ENCODE measurements at regions of chr6 and their contacts with region 1.

Region 1: GRCh38 chr6:89080542-89081422 is at the start of gene PNRC1:
- H3K4me3 ChIP-seq: peak within 1 kb of the TSS; percentile 99
- H3K27ac ChIP-seq: peak within 1 kb of the TSS; percentile 99
- H3K4me1 ChIP-seq: peaks cover 9% of the 10 kb centered on the region; the same call in 1 of the 2 replicates
- CTCF ChIP-seq: peak; percentile 53; the same call in 1 of the 2 replicates

Region 2: DNA sequence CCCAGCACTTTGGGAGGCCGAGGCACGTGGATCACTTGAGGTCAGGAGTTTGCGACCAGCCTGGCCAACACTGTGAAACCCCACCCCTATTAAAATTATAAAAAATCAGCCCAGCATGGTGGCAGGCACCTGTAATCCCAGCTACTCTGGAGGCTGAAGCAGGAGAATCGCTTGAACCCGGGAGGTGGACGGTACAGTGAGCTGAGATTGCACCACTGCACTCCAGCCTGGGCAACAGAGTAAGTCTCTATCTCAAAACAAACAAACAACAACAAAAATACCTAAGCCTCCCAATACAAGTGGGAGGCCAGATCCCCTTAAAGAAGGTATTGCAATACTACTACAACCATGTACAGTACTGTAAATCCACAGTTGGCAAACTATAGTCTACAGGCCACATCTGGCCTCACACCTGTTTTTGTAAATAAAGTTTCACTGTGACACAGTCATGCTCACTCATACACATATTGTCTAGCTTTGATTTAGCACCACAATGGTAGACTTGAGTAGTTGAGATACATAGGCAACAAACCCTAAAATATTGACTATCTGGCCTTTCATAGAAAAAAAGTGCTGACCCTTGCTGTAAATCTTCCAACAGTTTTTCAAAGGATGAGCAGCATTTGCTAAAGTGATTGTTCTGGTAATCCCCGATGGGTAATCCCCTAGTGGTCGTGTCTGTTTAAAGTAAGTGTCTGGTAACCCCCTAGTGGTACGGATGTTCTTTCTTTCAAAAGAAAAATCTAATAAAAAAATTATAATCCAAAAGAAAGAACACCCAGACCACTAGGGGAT is 319.3 kb before region 1 on chr6:
- CTCF ChIA-PET with region 1: no interaction called
- POLR2A ChIA-PET with region 1: no interaction called
- H3K4me3 ChIP-seq: no peak overlapping the region
- H3K27ac ChIP-seq: no peak overlapping the region
- H3K4me1 ChIP-seq: no peaks in the 10 kb centered on the region
- CTCF ChIP-seq: no peak

Region 3: GRCh38 chr6:88982720-88983119 is 98.1 kb before region 1 on chr6:
- CTCF ChIA-PET with region 1: interaction called, 19 read pairs
- POLR2A ChIA-PET with region 1: interaction called, 39 read pairs
- H3K4me3 ChIP-seq: no peak overlapping the region
- H3K27ac ChIP-seq: no peak overlapping the region
- H3K4me1 ChIP-seq: no peaks in the 10 kb centered on the region
- CTCF ChIP-seq: peak; percentile 50; the same call in 1 of the 2 replicates

Region 4: DNA sequence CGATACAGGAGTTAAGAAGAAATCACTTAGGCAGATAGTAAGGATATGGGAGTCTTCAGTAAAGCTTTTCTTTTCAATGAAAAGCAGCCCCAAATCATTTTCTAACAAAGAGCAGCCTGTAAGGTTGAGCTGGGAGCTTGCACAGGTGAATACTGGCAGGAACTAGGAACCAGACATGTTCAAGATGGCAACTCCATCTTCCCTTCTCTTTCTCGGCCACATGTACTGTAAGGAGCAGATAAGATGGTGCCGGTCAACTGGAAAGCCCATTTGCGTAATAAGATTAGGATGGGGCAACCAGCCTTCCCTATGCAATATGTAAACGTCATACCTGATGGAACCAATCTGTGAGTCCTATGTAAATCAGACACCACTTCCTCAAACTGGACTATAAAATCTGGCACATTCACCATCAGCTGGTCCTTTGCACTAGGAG is 71.1 kb before region 1 on chr6:
- CTCF ChIA-PET with region 1: interaction called, 3 read pairs
- POLR2A ChIA-PET with region 1: interaction called, 13 read pairs
- H3K4me3 ChIP-seq: no peak overlapping the region
- H3K27ac ChIP-seq: no peak overlapping the region
- H3K4me1 ChIP-seq: peaks cover 10% of the 10 kb centered on the region
- CTCF ChIP-seq: no peak

Region 5: DNA sequence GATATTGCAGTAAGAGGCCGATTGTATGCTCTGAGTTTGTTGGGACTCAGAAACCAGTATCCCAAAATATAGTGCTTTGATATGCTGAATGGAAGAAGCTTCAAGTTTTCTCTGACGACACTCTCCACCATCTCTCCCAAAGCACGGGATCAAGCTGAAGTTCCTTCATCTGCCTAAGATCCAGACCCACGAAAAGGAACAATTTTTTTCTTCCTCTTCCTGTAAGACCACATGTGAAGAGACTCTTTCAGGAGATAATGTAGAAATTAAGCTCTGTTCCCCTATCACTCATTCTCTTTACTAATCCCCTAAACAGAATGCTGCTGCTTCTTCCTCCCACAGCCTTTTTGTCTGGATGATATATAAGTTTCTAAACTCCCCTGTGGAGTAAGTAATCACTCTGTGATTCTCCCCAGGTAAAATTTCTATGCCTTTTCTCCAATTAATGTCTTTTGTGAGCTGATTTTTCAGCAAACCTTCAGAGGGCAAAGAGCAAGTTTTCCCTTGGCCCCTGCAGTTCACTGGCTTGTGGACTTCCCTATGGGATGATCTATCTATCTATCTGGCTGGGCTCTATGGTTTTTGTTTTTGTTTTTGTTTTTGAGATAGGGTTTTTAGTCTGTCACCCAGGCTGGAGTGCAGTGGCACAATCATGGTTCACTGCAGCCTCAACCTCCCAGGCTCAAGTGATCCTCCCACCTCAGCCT is 13.7 kb before region 1 on chr6:
- CTCF ChIA-PET with region 1: interaction called, 4 read pairs
- POLR2A ChIA-PET with region 1: interaction called, 20 read pairs
- H3K4me3 ChIP-seq: no peak overlapping the region
- H3K27ac ChIP-seq: no peak overlapping the region
- H3K4me1 ChIP-seq: no peaks in the 10 kb centered on the region
- CTCF ChIP-seq: no peak

Region 6: DNA sequence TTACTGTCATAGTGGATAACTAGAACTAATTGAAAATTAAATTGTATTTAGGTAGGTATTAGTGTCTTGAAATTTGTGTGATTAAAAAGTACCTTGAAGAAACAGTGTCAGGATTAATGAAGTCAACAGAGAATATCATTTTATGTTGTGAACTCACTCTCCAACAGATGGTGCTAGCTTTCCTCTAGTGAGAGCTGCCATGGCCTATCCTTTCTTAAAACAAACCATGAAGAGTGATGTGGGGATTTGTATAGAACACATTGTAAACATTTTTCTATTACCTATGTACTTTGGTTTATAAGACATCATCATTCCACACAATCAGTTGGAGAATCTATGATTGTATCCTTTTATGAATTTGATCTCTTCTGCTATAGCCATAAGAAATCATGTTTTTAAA is 41.8 kb after region 1 on chr6:
- CTCF ChIA-PET with region 1: interaction called, 9 read pairs
- POLR2A ChIA-PET with region 1: interaction called, 84 read pairs
- H3K4me3 ChIP-seq: no peak overlapping the region
- H3K27ac ChIP-seq: no peak overlapping the region
- H3K4me1 ChIP-seq: no peaks in the 10 kb centered on the region
- CTCF ChIP-seq: peak; percentile 45; the same call in 1 of the 2 replicates

Region 7: GRCh38 chr6:89145787-89146646 is 65.2 kb after region 1 on chr6 and contains the start of gene PM20D2:
- CTCF ChIA-PET with region 1: interaction called, 4 read pairs
- POLR2A ChIA-PET with region 1: interaction called, 48 read pairs
- H3K4me3 ChIP-seq: peak within 1 kb of the TSS; percentile 83
- H3K27ac ChIP-seq: peak within 1 kb of the TSS; percentile 93
- H3K4me1 ChIP-seq: peaks cover 20% of the 10 kb centered on the region
- CTCF ChIP-seq: no peak; the same call in 1 of the 2 replicates

Region 8: GRCh38 chr6:89385156-89385667 is 304.4 kb after region 1 on chr6:
- CTCF ChIA-PET with region 1: no interaction called
- POLR2A ChIA-PET with region 1: no interaction called
- H3K4me3 ChIP-seq: no peak overlapping the region
- H3K27ac ChIP-seq: no peak overlapping the region
- H3K4me1 ChIP-seq: no peaks in the 10 kb centered on the region; the same call in 1 of the 2 replicates
- CTCF ChIP-seq: no peak

Measured in HEK293 (cell line).